Transverse colon (tissue), 4 donors: ENCODE measurements at regions of chr4 and their contacts with region 1.

Region 1: DNA sequence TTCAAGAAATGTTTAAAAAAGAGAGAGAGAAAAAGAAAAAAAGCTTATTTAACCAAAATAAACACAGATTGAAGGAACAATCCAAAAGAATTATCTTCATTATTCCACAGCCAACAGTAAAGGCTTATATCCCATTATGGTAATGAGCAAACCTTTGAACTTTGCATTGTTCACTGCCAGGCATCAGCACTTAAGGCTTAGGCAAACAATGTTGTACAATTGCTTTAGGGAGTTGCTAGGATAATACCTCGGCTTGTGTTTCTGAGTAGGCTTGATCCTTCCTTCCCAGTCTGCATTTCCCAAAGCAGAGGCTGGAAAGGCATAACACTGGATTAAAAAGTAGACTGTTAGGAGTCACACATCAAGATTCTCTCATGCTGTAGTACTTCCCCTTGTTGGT is 352.7 kb upstream of the IGFBP7 start:
- DNase-seq: peak; percentile 8
- H3K4me3 ChIP-seq: no peak overlapping the region
- H3K27ac ChIP-seq: peak overlapping the region in 1 of 4 donors; percentile 56
- H3K4me1 ChIP-seq: peaks cover 0 to 4% (median 0%) of the 10 kb centered on the region in 4 donors
- H3K27me3 ChIP-seq: no peaks in the 10 kb centered on the region
- CTCF ChIP-seq: no peak
- EP300 ChIP-seq: no peak
- POLR2A ChIP-seq: no peak

Region 2: DNA sequence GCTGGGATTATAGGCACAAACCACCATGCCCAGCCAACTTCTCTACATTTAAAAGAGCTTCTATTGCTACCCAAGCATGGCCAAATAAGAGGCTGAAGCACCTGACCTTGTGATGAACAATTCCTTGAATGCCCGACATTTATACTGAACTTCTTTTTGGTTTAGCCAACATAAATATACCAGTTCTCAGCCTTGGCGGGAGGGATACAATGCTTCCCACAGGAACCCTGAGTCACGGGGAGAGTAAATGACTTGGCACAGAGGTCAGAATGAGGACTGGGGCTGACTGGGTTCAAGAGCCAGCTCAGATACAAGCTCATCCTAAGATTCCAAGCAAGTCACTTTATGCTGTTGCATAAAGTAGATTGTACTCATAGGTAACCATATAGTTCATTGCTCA is 787.9 kb before region 1 on chr4:
- in situ Hi-C with region 1: no loop called
- intact Hi-C with region 1: loop called (anchors 5 kb)
- DNase-seq: no peak
- H3K4me3 ChIP-seq: no peak overlapping the region
- H3K27ac ChIP-seq: no peak overlapping the region
- H3K4me1 ChIP-seq: no peaks in the 10 kb centered on the region
- H3K27me3 ChIP-seq: peaks cover 6% of the 10 kb centered on the region
- CTCF ChIP-seq: no peak
- EP300 ChIP-seq: no peak
- POLR2A ChIP-seq: no peak

Region 3: GRCh38 chr4:57370691-57371090 is 92.2 kb before region 1 on chr4:
- in situ Hi-C with region 1: no loop called
- intact Hi-C with region 1: no loop called
- DNase-seq: no peak
- H3K4me3 ChIP-seq: no peak overlapping the region
- H3K27ac ChIP-seq: no peak overlapping the region
- H3K4me1 ChIP-seq: no peaks in the 10 kb centered on the region
- H3K27me3 ChIP-seq: no peaks in the 10 kb centered on the region
- CTCF ChIP-seq: no peak
- EP300 ChIP-seq: no peak
- POLR2A ChIP-seq: no peak